Common myeloid progenitor, CD34-positive (primary cell): ENCODE measurements at regions of chr12 and their contacts with region 1.

Region 1: GRCh38 chr12:66269757-66270383 is 32.4 kb upstream of the HELB start:
- DNase-seq: peak; percentile 44 to 61 (median 55)
- H3K4me3 ChIP-seq: no peak overlapping the region
- H3K27ac ChIP-seq: no peak overlapping the region
- H3K4me1 ChIP-seq: peaks cover 0 to 24% (median 5%) of the 10 kb centered on the region in 4 experiments
- H3K27me3 ChIP-seq: no peaks in the 10 kb centered on the region

Region 2: GRCh38 chr12:66247741-66248140 is 22.1 kb before region 1 on chr12:
- CTCF ChIA-PET with region 1: interaction called, 12 read pairs
- POLR2A ChIA-PET with region 1: no interaction called
- DNase-seq: no peak
- H3K4me3 ChIP-seq: no peak overlapping the region
- H3K27ac ChIP-seq: no peak overlapping the region
- H3K4me1 ChIP-seq: no peaks in the 10 kb centered on the region
- H3K27me3 ChIP-seq: no peaks in the 10 kb centered on the region

Region 3: GRCh38 chr12:66340131-66340530 is 70.3 kb after region 1 on chr12:
- CTCF ChIA-PET with region 1: no interaction called
- POLR2A ChIA-PET with region 1: no interaction called
- DNase-seq: no peak
- H3K4me3 ChIP-seq: no peak overlapping the region
- H3K27ac ChIP-seq: no peak overlapping the region
- H3K4me1 ChIP-seq: no peaks in the 10 kb centered on the region
- H3K27me3 ChIP-seq: no peaks in the 10 kb centered on the region

Region 4: GRCh38 chr12:66612090-66612775 is 342.4 kb after region 1 on chr12:
- CTCF ChIA-PET with region 1: no interaction called
- POLR2A ChIA-PET with region 1: no interaction called
- DNase-seq: no peak
- H3K4me3 ChIP-seq: no peak overlapping the region
- H3K27ac ChIP-seq: no peak overlapping the region
- H3K4me1 ChIP-seq: no peaks in the 10 kb centered on the region
- H3K27me3 ChIP-seq: no peaks in the 10 kb centered on the region